K562 (cell line): ENCODE measurements at regions of chr14 and their contacts with region 1.

Region 1: GRCh38 chr14:31059152-31059924 is 33.2 kb upstream of the STRN3 start:
- DNase-seq: peak; percentile 72 to 96 (median 82)
- ATAC-seq: peak; percentile 86
- H3K4me3 ChIP-seq: no peak overlapping the region
- H3K27ac ChIP-seq: peak overlapping the region; percentile 82
- H3K4me1 ChIP-seq: peaks cover 14 to 36% of the 10 kb centered on the region in 2 experiments; a peak in 4 of 5 replicates
- H3K27me3 ChIP-seq: no peaks in the 10 kb centered on the region
- CTCF ChIP-seq: no peak
- EP300 ChIP-seq: peak; percentile 99
- POLR2A ChIP-seq: no peak
- RAD21 ChIP-seq: peak; percentile 10 to 33; a peak in 2 of 4 replicates

Region 2: DNA sequence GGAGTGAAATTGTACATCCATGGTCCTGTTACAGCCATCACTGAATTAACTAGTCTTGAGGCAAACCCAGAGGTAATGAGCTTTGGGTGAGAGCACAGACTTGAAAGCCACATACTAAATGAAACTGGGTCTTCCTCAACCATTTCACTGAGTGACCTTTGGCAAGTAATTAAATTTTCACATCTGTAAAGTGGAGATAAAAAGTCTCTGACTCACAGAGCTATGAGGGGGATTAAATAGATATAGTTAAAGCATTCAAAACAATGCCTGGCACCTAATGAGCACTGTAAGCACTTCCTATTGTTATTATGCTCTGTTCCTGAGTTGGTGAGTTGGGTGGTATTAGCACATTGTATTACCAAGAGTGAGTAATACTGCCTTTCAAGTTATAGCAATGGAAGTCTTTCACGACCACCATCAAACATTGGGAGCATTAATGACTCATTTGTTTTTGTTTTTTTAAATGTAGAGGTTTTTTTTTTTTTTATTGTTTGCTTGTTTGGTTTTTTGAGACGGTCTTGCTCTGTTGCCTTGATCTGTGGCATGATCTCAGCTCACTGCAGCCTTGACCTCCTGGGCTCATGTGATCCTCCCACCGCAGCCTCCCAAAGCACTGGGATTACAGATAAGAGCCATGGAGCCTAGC is 20.7 kb before region 1 on chr14:
- CTCF ChIA-PET with region 1: no interaction called
- POLR2A ChIA-PET with region 1: interaction called, 12 read pairs
- in situ Hi-C with region 1: no loop called
- intact Hi-C with region 1: loop called (anchors 2 kb)
- DNase-seq: peak in 2 of 4 experiments; percentile 55 to 78
- ATAC-seq: peak; percentile 80
- H3K4me3 ChIP-seq: no peak overlapping the region
- H3K27ac ChIP-seq: peak overlapping the region; percentile 88
- H3K4me1 ChIP-seq: peaks cover 17 to 25% of the 10 kb centered on the region in 2 experiments; a peak in 4 of 5 replicates
- H3K27me3 ChIP-seq: no peaks in the 10 kb centered on the region
- CTCF ChIP-seq: no peak
- EP300 ChIP-seq: peak; percentile 80; the same call in 1 of the 2 replicates
- POLR2A ChIP-seq: no peak
- RAD21 ChIP-seq: no peak